Uterus (tissue), 4 donors: ENCODE measurements at regions of chr10 and their contacts with region 1.

Region 1: GRCh38 chr10:102917962-102918816 is at the start of gene CNNM2:
- DNase-seq: peak; percentile 99 to 100
- H3K4me3 ChIP-seq: peak within 1 kb of the TSS; percentile 54 to 79
- H3K27ac ChIP-seq: peak within 1 kb of the TSS; percentile 87 to 94
- H3K4me1 ChIP-seq: peaks cover 0 to 4% of the 10 kb centered on the region in 2 donors
- H3K27me3 ChIP-seq: no peaks in the 10 kb centered on the region
- CTCF ChIP-seq: peak in 2 of 4 experiments; percentile 7 to 12
- POLR2A ChIP-seq: peak; percentile 55 to 68
- total RNA-seq, gene CNNM2: 5.1 to 11.0 (median 7.4) TPM

Region 2: DNA sequence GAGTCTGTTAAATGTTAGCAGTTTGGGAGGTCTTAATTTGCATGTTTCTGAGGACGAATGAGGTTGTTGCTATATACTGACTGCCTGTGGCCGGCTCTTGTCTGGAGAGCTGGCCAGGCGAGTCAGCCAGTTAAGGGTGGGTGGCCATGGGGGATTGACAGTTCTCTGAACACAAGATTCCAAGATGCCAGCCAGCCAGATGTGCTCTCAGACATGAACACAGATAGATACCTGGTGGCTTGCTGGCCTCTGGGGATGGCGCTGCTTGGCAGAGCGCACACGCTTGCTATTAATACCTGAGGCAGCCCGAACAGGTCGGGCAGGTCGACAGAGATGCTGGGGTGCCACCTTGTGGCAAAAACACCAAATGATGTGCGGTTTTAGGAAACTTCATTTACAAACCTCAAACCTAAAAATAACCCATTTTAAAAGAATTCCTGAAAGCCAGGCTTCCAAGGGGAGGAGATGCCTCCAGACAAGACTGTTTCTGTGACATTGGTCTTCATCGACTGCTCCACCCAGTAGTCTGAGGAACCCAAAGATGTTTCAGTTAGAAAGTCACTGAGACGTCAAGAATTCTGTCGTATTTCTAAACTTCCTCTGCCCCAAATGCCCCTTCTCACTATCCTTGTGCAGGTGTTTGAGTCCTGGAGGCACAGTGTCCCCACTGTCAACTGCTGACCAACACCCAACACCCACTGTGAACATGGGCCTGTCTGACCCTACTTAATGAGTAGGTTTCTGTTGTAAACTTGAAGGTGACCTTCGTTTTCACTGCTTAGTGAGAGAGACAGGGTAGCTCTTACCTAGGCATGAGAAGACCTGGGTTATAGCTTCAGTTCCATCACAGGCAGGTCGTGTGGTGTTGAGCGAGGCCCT is 151.5 kb after region 1 on chr10:
- intact Hi-C with region 1: loop called (anchors 5 kb)
- DNase-seq: peak; percentile 53 to 58
- H3K4me3 ChIP-seq: no peak overlapping the region
- H3K27ac ChIP-seq: no peak overlapping the region
- H3K4me1 ChIP-seq: no peaks in the 10 kb centered on the region
- H3K27me3 ChIP-seq: no peaks in the 10 kb centered on the region
- CTCF ChIP-seq: peak; percentile 47 to 70 (median 60)
- POLR2A ChIP-seq: no peak

Region 3: GRCh38 chr10:103244663-103245271 is 326.6 kb after region 1 on chr10:
- intact Hi-C with region 1: loop called (anchors 5 kb)
- DNase-seq: peak; percentile 69 to 75
- H3K4me3 ChIP-seq: no peak overlapping the region
- H3K27ac ChIP-seq: no peak overlapping the region
- H3K4me1 ChIP-seq: no peaks in the 10 kb centered on the region
- H3K27me3 ChIP-seq: no peaks in the 10 kb centered on the region
- CTCF ChIP-seq: peak; percentile 69 to 87 (median 78)
- POLR2A ChIP-seq: no peak